ENCODE measurements at regions of chr7 and their contacts with region 1.

Region 1: DNA sequence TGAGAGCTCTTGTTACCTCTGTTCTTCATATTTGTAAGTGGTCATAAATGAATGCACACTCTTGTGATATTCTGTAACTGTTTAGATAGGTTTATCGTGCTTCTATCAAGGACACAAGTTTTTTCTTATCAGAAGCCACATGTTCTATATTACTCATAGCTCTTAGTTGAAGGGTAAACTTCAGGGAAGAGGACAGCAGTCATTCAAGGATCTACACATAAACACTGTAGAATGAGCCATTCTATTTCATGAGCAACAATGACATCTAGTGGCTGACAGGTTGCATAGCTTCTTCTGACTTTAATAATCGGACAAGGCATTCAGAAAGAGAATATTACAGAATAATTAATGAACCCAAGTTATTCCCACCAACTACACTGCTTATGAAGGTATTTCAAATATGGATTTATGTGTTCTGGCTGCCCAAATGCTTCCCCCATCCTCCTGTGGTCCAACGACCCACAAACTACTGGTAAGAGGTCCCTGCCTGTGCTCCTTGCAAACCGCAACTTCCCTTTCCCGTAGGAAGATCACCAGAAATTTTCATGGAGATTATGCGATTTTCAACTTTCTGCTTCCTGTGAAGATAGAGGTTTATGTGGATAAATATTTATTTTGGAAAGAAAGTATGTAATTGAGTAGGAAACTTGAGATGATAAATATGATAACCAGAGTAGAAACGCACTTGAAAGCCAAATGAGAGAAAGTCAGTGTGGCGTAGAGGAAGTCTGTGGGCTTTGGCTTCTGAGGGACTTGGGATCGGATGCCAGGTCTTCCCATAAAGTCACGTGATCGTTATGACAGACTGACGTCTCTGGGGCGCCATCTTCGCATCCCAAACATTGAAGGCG is 16.8 kb upstream of the ABCB5 start:
- DNase-seq: peak in 1 of 2 donors; percentile 69
- ATAC-seq: peak; percentile 70 to 75 (median 72)
- H3K4me3 ChIP-seq: no peak overlapping the region
- H3K4me3 Mint-ChIP-seq: no peak overlapping the region
- H3K27ac ChIP-seq: no peak overlapping the region
- H3K27ac Mint-ChIP-seq: peak overlapping the region in 1 of 2 donors; percentile 57
- H3K4me1 ChIP-seq: no peaks in the 10 kb centered on the region
- H3K4me1 Mint-ChIP-seq: peaks cover 0 to 8% of the 10 kb centered on the region in 2 donors
- H3K27me3 ChIP-seq: no peaks in the 10 kb centered on the region
- H3K27me3 Mint-ChIP-seq: peaks cover 3 to 14% of the 10 kb centered on the region in 2 donors
- CTCF ChIP-seq: peak; percentile 60

Region 2: DNA sequence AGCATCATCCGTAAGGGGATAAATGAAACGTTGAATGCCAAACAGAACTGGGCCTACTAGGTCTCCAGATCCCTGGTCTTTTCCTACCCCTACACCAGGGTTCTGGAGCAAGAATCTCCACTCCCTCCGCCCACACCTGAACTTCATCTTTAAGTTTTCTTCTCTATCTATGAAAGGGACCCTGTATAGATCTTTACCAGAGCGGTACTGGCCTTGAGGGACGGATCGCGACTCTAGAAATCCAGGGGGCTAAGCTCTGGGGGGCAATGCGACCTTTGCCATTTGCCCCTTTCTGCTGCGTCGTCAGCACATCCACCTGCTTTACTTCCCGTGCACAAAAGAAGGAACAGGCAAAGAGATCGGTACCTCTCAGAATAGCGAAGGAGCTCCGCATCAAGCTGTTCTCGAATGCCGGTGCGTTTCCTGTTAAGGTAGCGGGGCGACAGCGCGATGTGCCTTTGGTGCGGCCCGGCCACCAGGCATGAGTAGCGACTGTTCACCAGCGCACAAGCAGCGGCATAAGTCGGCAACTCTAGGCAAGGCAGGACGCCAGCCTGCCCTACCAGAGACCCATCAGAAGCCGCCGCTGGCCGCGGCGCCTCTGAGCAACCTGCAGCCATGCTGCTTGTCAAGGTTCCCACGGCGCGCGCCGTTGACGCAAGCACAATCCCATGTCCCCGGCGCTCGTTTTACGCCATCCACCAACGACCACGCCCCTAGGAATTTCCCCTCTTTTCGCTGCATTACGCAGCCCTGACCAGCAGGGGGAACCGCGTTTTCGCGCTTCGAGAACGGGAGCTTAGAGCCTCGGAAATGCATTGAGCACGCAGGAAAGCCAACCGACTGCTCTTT is 890.1 kb before region 1 on chr7 and contains the start of gene POLR1F:
- intact Hi-C with region 1: loop called (anchors 1 kb)
- DNase-seq: peak; percentile 91 to 98
- ATAC-seq: peak; percentile 95 to 99 (median 96)
- H3K4me3 ChIP-seq: peak within 1 kb of the TSS; percentile 96
- H3K4me3 Mint-ChIP-seq: peak within 1 kb of the TSS; percentile 95
- H3K27ac ChIP-seq: peak within 1 kb of the TSS; percentile 83
- H3K27ac Mint-ChIP-seq: peak within 1 kb of the TSS; percentile 94 to 96
- H3K4me1 ChIP-seq: peaks cover 15% of the 10 kb centered on the region
- H3K4me1 Mint-ChIP-seq: peaks cover 37 to 43% of the 10 kb centered on the region in 2 donors
- H3K27me3 ChIP-seq: no peaks in the 10 kb centered on the region
- H3K27me3 Mint-ChIP-seq: peaks cover 0 to 14% of the 10 kb centered on the region in 2 donors
- CTCF ChIP-seq: peak; percentile 84
- total RNA-seq, gene POLR1F: 25.9 to 38.5 (median 31.3) TPM

Region 3: GRCh38 chr7:19713676-19714075 is 885.0 kb before region 1 on chr7:
- intact Hi-C with region 1: loop called (anchors 1 kb)
- DNase-seq: peak in 1 of 2 donors; percentile 75
- ATAC-seq: no peak
- H3K4me3 ChIP-seq: no peak overlapping the region
- H3K4me3 Mint-ChIP-seq: no peak overlapping the region
- H3K27ac ChIP-seq: no peak overlapping the region
- H3K27ac Mint-ChIP-seq: no peak overlapping the region
- H3K4me1 ChIP-seq: peaks cover 7% of the 10 kb centered on the region
- H3K4me1 Mint-ChIP-seq: peaks cover 15 to 16% of the 10 kb centered on the region in 2 donors
- H3K27me3 ChIP-seq: no peaks in the 10 kb centered on the region
- H3K27me3 Mint-ChIP-seq: peaks cover 0 to 14% of the 10 kb centered on the region in 2 donors
- CTCF ChIP-seq: peak; percentile 53

Region 4: DNA sequence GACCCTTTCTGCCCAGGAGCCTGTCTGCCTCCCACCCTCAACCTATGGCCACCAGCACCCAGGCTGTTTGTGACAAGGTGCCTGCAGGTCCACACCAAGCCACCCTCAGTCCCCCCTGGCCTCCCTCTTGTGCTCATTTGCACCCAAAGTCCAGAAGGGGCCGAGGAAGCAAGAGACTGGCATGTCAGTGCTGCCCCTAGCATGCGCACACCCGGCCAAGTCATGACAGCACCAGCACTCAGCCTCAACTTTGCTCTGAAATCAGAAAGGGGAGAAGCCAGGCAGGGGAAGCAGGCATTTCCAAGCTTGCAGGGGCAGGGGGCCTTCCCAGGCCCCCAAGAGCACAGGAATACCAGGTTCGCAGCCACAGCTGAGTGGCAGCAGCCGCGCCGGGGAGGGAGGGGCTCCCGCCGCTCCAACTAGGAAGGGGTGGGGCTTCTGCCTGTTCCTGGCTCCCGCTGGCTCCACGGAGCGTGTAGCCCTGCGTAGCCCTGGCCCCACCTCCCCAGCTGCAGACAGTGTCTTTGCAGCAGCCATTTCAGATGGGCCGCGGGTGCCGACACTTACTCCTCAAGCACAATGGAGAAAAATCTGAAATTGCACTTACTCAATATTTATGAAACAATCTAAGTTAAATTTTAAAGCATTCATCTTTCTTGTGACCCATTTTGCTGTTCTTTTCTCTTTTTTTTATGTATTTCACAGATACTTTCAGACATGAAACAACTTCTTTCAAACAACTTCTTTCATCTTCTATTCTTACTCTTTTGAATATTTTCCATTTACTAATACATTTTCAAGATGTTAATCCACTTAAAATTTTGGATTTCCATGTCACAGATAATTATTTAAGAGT is 38.1 kb before region 1 on chr7:
- intact Hi-C with region 1: no loop called
- DNase-seq: no peak
- ATAC-seq: no peak
- H3K4me3 ChIP-seq: no peak overlapping the region
- H3K4me3 Mint-ChIP-seq: no peak overlapping the region
- H3K27ac ChIP-seq: no peak overlapping the region
- H3K27ac Mint-ChIP-seq: no peak overlapping the region
- H3K4me1 ChIP-seq: no peaks in the 10 kb centered on the region
- H3K4me1 Mint-ChIP-seq: no peaks in the 10 kb centered on the region
- H3K27me3 ChIP-seq: no peaks in the 10 kb centered on the region
- H3K27me3 Mint-ChIP-seq: no peaks in the 10 kb centered on the region
- CTCF ChIP-seq: no peak

Measured in natural killer cell (primary cell).